ENCODE measurements at regions of chr5 and their contacts with region 1.

Region 1: GRCh38 chr5:66306105-66306843 is 162.2 kb downstream of the SREK1 start:
- DNase-seq: peak; percentile 63
- ATAC-seq: peak; percentile 93
- H3K4me3 ChIP-seq: no peak overlapping the region
- H3K27ac ChIP-seq: no peak overlapping the region
- H3K4me1 ChIP-seq: no peaks in the 10 kb centered on the region
- H3K27me3 ChIP-seq: peaks cover 10% of the 10 kb centered on the region; the same call in 1 of the 2 replicates
- CTCF ChIP-seq: peak; percentile 53 to 95 (median 85); a peak in 5 of 6 replicates
- POLR2A ChIP-seq: no peak
- RAD21 ChIP-seq: peak; percentile 48

Region 2: DNA sequence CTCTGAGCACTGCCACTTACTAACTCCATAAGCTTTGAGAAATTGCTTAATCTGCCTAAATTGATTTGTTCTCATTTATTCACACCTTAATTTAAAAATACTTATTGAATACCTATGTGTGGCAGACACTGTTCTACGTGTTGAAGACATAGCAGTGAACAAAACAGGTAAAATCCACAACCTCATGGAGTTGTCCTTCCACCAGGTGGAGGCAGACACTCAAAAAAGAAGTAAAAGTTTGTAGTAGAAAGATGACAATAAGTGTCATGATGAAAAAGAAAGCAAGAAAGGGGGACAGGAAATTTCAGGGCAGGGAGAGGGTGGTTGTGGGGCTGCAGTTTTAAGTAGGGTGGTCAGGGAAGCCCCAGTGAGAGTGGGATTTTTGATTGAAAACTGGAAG is 67.2 kb before region 1 on chr5:
- CTCF ChIA-PET with region 1: interaction called, 7 read pairs
- POLR2A ChIA-PET with region 1: no interaction called
- RAD21 ChIA-PET with region 1: no interaction called
- intact Hi-C with region 1: loop called (anchors 2 kb)
- DNase-seq: peak; percentile 19
- ATAC-seq: no peak
- H3K4me3 ChIP-seq: no peak overlapping the region
- H3K27ac ChIP-seq: no peak overlapping the region
- H3K4me1 ChIP-seq: no peaks in the 10 kb centered on the region
- H3K27me3 ChIP-seq: 0 out of 2 replicates have a peak, but pooled peaks cover 8% of the 10 kb centered on the region
- CTCF ChIP-seq: peak; percentile 37 to 58 (median 41); a peak in 4 of 6 replicates
- POLR2A ChIP-seq: no peak
- RAD21 ChIP-seq: peak; percentile 68

Region 3: GRCh38 chr5:66324357-66324756 is 18.1 kb after region 1 on chr5:
- CTCF ChIA-PET with region 1: interaction called, 12 read pairs
- POLR2A ChIA-PET with region 1: no interaction called
- RAD21 ChIA-PET with region 1: no interaction called
- intact Hi-C with region 1: no loop called
- DNase-seq: no peak
- ATAC-seq: no peak
- H3K4me3 ChIP-seq: no peak overlapping the region
- H3K27ac ChIP-seq: no peak overlapping the region
- H3K4me1 ChIP-seq: no peaks in the 10 kb centered on the region
- H3K27me3 ChIP-seq: peaks cover 35% of the 10 kb centered on the region
- CTCF ChIP-seq: no peak
- POLR2A ChIP-seq: no peak
- RAD21 ChIP-seq: no peak

Region 4: GRCh38 chr5:66498791-66499207 is 192.5 kb after region 1 on chr5:
- CTCF ChIA-PET with region 1: interaction called, 6 read pairs
- POLR2A ChIA-PET with region 1: no interaction called
- RAD21 ChIA-PET with region 1: no interaction called
- intact Hi-C with region 1: loop called (anchors 5 kb)
- DNase-seq: no peak
- ATAC-seq: peak; percentile 68
- H3K4me3 ChIP-seq: no peak overlapping the region
- H3K27ac ChIP-seq: no peak overlapping the region
- H3K4me1 ChIP-seq: no peaks in the 10 kb centered on the region
- H3K27me3 ChIP-seq: no peaks in the 10 kb centered on the region
- CTCF ChIP-seq: peak; percentile 7 to 44 (median 43); a peak in 3 of 6 replicates
- POLR2A ChIP-seq: no peak
- RAD21 ChIP-seq: peak; percentile 39; the same call in 1 of the 2 replicates

Region 5: GRCh38 chr5:66757188-66757833 is 451.0 kb after region 1 on chr5:
- CTCF ChIA-PET with region 1: interaction called, 49 read pairs
- POLR2A ChIA-PET with region 1: no interaction called
- RAD21 ChIA-PET with region 1: interaction called in 1 of 2 experiments, 6 read pairs
- intact Hi-C with region 1: loop called (anchors 1 kb)
- DNase-seq: peak; percentile 18
- ATAC-seq: peak; percentile 46; the same call in 1 of the 2 replicates
- H3K4me3 ChIP-seq: no peak overlapping the region
- H3K27ac ChIP-seq: no peak overlapping the region
- H3K4me1 ChIP-seq: no peaks in the 10 kb centered on the region
- H3K27me3 ChIP-seq: peaks cover 35% of the 10 kb centered on the region
- CTCF ChIP-seq: peak; percentile 14 to 58 (median 30); a peak in 3 of 6 replicates
- POLR2A ChIP-seq: no peak
- RAD21 ChIP-seq: peak; percentile 58

Region 6: GRCh38 chr5:66828548-66829357 is 522.5 kb after region 1 on chr5:
- CTCF ChIA-PET with region 1: interaction called, 10 read pairs
- POLR2A ChIA-PET with region 1: no interaction called
- RAD21 ChIA-PET with region 1: no interaction called
- intact Hi-C with region 1: no loop called
- DNase-seq: no peak
- ATAC-seq: no peak
- H3K4me3 ChIP-seq: no peak overlapping the region
- H3K27ac ChIP-seq: no peak overlapping the region
- H3K4me1 ChIP-seq: no peaks in the 10 kb centered on the region
- H3K27me3 ChIP-seq: peaks cover 28% of the 10 kb centered on the region
- CTCF ChIP-seq: no peak
- POLR2A ChIP-seq: no peak
- RAD21 ChIP-seq: no peak

Region 7: GRCh38 chr5:67209142-67209771 is 903.0 kb after region 1 on chr5:
- CTCF ChIA-PET with region 1: interaction called, 3 read pairs
- POLR2A ChIA-PET with region 1: no interaction called
- RAD21 ChIA-PET with region 1: no interaction called
- intact Hi-C with region 1: loop called (anchors 10 kb)
- DNase-seq: peak; percentile 69
- ATAC-seq: peak; percentile 81
- H3K4me3 ChIP-seq: no peak overlapping the region
- H3K27ac ChIP-seq: no peak overlapping the region
- H3K4me1 ChIP-seq: peaks cover 2 to 43% of the 10 kb centered on the region in 2 experiments
- H3K27me3 ChIP-seq: no peaks in the 10 kb centered on the region
- CTCF ChIP-seq: peak; percentile 62 to 86 (median 73)
- POLR2A ChIP-seq: no peak
- RAD21 ChIP-seq: peak; percentile 92